ENCODE measurements at regions of chr12 and their contacts with region 1.

Region 1: GRCh38 chr12:583234-583869 is 79.9 kb downstream of the NINJ2 start:
- DNase-seq: peak; percentile 51 to 89
- ATAC-seq: peak; percentile 92 to 95 (median 94)
- H3K4me3 ChIP-seq: peak overlapping the region; percentile 28
- H3K27ac ChIP-seq: peak overlapping the region; percentile 94
- H3K4me1 ChIP-seq: peaks cover 29% of the 10 kb centered on the region
- H3K27me3 ChIP-seq: no peaks in the 10 kb centered on the region
- CTCF ChIP-seq: no peak

Region 2: DNA sequence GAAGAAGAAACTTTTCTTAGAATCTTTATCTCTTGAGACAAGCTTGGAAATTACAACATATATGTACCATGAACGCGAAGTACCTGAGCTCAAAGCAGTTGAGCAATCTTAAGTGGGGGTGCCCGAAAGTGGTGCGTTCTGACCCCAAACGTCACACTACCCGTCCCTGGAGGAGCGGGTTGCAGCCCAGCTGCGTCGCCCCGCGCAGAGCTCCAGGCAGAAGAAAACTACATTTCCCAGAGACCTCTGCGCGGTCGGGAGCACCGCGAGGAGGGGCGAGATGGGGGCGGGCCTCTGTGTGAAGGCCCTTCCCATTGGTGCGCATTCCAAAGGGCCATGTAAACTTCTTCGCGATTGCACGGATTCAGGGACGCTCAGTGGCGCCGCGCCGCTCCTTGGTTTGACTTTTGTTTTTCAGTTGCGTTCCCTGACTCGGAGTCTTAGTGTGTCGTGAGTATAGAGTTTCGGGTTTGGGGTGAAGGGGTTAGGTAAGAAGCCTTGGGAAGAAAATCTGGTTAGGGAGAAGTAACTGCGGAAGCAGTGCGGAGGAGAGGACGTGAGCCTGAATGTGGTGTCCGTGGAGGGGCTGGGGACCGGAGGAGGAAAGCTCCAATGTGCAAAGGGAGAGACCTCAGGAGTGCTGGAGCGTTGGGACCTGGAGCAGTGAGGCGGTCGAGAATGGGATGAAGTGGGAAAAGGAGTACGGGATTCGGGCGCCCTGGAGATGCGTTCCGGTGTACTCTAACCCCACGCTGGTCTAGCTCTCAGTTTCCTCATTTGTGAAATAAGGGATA is 181.9 kb before region 1 on chr12 and contains the start of gene CCDC77:
- intact Hi-C with region 1: no loop called
- DNase-seq: peak; percentile 89 to 94
- ATAC-seq: peak; percentile 99 to 100 (median 100)
- H3K4me3 ChIP-seq: peak within 1 kb of the TSS; percentile 85
- H3K27ac ChIP-seq: peak within 1 kb of the TSS; percentile 64
- H3K4me1 ChIP-seq: peaks cover 8% of the 10 kb centered on the region
- H3K27me3 ChIP-seq: no peaks in the 10 kb centered on the region
- CTCF ChIP-seq: peak; percentile 34
- total RNA-seq, gene CCDC77: 2.8 to 4.5 (median 3.4) TPM

Region 3: DNA sequence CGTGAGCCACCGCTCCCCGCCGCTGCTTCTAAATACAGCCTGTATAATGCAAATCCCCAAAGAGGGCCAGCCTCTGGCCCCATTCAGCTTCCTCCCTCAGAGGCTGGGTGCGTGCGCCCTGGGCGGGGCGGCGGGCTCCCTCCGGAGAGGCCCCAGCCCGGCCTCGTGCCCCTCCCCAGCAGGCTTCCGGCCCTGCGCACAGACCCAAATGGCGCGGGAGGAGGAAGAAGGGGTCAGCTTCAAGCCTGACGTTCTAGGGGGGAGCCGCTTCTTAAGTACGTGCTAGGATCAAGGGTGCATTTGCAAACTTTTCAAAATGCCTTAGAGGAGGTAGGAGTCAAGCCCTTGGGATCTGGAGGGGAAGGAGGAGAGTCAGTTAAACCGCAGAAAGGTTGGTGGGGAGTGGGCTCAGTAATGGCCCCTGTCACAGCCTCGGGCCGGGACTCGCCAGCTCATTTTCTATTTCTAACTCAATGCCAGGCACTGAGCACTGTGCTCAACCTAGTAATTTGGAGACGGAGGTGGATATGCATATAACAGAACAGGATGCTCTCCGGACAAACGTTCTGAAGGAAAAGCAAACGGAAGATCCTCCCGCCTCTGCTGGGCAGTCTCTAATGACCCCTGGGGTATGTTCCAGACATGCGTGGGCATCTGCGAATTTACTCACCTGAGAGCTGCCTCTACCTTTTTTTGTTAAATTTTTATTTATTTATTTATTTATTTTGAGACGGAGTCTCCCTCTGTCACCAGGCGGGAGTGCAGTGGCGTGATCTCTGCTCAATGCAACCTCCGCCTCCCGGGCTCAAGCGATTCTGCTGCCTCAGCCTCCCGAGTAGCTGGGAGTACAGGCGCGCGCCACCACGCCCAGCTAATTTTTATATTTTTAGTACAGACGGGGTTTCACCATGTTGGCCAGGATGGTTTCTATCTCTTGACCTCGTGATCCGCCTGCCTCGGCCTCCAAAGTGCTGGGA is 47.6 kb after region 1 on chr12:
- intact Hi-C with region 1: loop called (anchors 5 kb)
- DNase-seq: peak; percentile 61 to 81
- ATAC-seq: no peak
- H3K4me3 ChIP-seq: no peak overlapping the region
- H3K27ac ChIP-seq: peak overlapping the region; percentile 87
- H3K4me1 ChIP-seq: peaks cover 43% of the 10 kb centered on the region
- H3K27me3 ChIP-seq: no peaks in the 10 kb centered on the region
- CTCF ChIP-seq: no peak

Measured in psoas muscle (tissue), 8 donors.